Activated CD4-positive, alpha-beta memory T cell treated with anti-CD3 and anti-CD28 coated beads for 36 hours (primary cell): ENCODE measurements at regions of chr2 and their contacts with region 1.

Region 1: GRCh38 chr2:161077367-161078210 is 82.6 kb upstream of the TANK start:
- DNase-seq: peak; percentile 84
- H3K4me3 Mint-ChIP-seq: peak overlapping the region; percentile 6
- H3K27ac Mint-ChIP-seq: peak overlapping the region; percentile 85
- H3K4me1 Mint-ChIP-seq: peaks cover 42% of the 10 kb centered on the region
- H3K27me3 Mint-ChIP-seq: no peaks in the 10 kb centered on the region

Region 2: DNA sequence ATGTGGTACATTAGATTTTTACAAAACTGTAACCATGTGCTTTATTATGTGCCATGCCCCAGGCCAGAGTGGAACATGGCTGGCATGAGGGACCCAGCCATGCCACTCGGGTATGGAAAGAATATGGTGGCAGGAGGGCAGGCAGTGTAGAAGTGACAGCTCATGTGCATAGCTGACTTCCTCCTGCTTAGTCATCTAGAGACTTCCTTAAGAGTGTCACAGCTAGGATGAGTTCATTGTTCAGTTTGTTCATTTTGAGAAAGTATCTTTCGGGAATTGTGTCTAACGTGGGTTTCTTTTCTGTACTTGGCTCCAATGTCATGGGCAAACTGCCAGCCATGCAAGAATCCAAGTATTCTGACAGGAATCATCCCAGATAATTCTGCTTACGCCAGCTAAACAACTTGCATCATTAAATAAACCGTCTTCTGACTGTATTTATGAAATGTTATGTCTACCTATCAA is 783.2 kb before region 1 on chr2:
- CTCF ChIA-PET with region 1: no interaction called
- POLR2A ChIA-PET with region 1: no interaction called
- intact Hi-C with region 1: loop called (anchors 1 kb)
- DNase-seq: peak; percentile 68
- H3K4me3 Mint-ChIP-seq: no peak overlapping the region
- H3K27ac Mint-ChIP-seq: peak overlapping the region; percentile 18
- H3K4me1 Mint-ChIP-seq: peaks cover 76% of the 10 kb centered on the region
- H3K27me3 Mint-ChIP-seq: no peaks in the 10 kb centered on the region

Region 3: DNA sequence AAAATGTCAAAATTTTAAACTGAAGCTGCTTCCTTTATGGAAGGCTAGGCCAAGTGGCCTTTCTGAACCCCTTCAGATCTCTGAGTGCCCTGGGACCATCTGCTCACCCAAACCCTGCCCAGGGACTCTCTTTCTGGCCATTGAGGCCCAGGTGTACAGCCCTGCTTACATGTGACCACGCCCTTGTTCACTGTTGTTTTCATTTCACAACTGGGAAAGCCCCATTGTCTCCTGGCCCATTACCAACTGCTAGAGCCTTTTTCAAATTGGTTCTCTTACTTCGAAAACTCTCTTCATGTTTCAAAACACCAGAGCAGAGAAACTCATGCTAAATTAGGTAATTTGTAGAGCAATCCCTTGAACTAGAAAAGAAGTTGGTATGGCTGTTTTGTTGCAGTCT is 136.9 kb before region 1 on chr2:
- CTCF ChIA-PET with region 1: no interaction called
- POLR2A ChIA-PET with region 1: no interaction called
- intact Hi-C with region 1: no loop called
- DNase-seq: peak; percentile 26
- H3K4me3 Mint-ChIP-seq: no peak overlapping the region
- H3K27ac Mint-ChIP-seq: peak overlapping the region; percentile 7
- H3K4me1 Mint-ChIP-seq: peaks cover 25% of the 10 kb centered on the region
- H3K27me3 Mint-ChIP-seq: no peaks in the 10 kb centered on the region

Region 4: DNA sequence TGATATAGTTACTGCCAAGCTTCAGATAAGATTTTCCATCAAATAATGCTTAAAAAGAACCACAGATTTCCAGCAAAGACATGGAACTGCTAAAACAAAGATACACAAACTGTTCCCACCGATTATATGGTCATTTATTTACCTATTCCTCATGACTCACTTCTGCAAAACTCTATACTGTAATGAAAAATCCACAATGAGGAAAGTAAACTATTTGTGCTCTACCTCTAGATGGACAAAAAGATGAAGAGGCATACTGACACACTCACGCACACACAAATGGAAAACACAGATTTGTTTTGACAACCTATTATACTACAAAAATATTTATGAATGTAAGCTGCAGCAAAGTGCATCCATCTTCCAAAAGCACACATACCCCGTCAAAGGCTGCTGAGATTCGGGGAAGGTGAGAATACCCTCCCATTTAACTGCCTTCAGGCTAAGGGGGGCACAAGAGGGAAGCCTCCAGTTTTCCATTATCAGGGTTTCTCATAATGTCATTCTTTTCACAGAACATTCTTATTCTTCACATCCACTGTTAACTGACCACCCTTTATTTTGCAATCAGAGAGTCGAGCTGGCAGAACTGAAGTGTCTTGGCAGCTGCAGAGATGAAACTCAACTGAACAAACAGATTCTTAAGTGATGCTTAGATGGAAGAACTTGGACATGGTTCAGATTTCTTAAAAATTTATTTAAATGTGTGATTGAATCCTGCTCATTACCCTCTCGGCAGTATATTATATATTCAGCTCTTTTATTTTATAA is 33.3 kb before region 1 on chr2:
- CTCF ChIA-PET with region 1: no interaction called
- POLR2A ChIA-PET with region 1: no interaction called
- intact Hi-C with region 1: no loop called
- DNase-seq: no peak
- H3K4me3 Mint-ChIP-seq: no peak overlapping the region
- H3K27ac Mint-ChIP-seq: no peak overlapping the region
- H3K4me1 Mint-ChIP-seq: no peaks in the 10 kb centered on the region
- H3K27me3 Mint-ChIP-seq: peaks cover 14% of the 10 kb centered on the region

Region 5: DNA sequence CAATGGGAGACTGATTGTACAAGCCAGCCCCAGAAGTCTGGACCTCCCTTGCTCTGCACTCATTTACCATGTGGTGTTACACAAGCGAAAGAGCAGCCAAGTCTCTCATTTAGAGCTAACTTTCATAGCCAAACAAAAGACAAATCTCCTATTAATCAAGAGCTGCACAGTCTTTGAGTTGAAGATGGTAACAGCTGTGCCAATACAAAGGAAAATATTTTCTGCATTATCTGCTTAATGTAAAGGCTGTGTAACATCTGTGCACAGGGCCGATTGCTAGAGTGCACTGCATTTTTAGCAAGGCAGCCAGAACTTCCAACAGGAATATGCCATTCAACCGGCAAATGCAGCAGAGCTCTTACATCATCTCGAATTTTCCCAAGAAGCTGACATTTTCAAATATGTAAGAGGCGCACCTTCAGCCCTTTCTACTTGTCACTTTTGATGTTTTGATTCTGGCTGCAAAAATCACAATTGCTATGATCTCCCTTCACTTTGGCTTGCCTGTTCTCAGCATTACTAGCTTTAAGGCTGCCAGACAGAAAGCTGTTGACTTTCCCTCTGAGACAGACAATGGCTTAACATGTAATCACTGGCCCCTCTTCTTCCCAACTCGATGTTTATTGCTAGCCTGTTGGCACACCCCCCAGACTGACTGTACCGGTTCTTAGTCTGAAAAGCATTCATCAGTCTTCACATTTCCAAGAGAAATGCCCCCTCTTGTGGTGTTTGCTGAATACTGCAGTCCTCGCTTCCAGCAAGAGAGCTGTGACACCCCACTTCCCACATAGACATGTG is 14.2 kb before region 1 on chr2:
- CTCF ChIA-PET with region 1: interaction called, 48 read pairs
- POLR2A ChIA-PET with region 1: no interaction called
- intact Hi-C with region 1: no loop called
- DNase-seq: peak; percentile 74
- H3K4me3 Mint-ChIP-seq: no peak overlapping the region
- H3K27ac Mint-ChIP-seq: no peak overlapping the region
- H3K4me1 Mint-ChIP-seq: peaks cover 10% of the 10 kb centered on the region
- H3K27me3 Mint-ChIP-seq: no peaks in the 10 kb centered on the region

Region 6: DNA sequence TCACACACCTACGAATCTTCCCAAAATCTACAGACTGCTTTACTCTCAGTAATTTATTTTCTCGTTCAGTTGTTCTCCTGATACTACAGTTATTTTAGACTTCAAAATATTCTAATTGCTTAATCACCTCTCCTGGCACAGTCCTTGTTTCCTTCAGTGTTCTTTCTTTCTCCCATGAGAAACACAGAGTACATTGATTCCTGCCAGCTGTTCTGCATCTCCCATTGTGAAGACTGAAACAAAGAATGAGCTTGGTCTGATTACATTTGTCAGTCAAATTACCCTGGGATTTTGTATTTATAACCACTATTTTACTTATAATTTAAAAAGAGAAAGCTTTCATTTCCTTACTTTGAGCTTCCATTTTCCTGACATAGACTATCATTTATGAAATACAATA is 18.7 kb after region 1 on chr2:
- CTCF ChIA-PET with region 1: no interaction called
- POLR2A ChIA-PET with region 1: no interaction called
- intact Hi-C with region 1: no loop called
- DNase-seq: no peak
- H3K4me3 Mint-ChIP-seq: no peak overlapping the region
- H3K27ac Mint-ChIP-seq: no peak overlapping the region
- H3K4me1 Mint-ChIP-seq: peaks cover 3% of the 10 kb centered on the region
- H3K27me3 Mint-ChIP-seq: no peaks in the 10 kb centered on the region

Region 7: GRCh38 chr2:161136696-161137324 is 59.2 kb after region 1 on chr2:
- CTCF ChIA-PET with region 1: interaction called, 7 read pairs
- POLR2A ChIA-PET with region 1: interaction called, 6 read pairs
- intact Hi-C with region 1: loop called (anchors 1 kb)
- DNase-seq: peak; percentile 35
- H3K4me3 Mint-ChIP-seq: peak overlapping the region; percentile 96
- H3K27ac Mint-ChIP-seq: peak overlapping the region; percentile 100
- H3K4me1 Mint-ChIP-seq: peaks cover 45% of the 10 kb centered on the region
- H3K27me3 Mint-ChIP-seq: no peaks in the 10 kb centered on the region

Region 8: DNA sequence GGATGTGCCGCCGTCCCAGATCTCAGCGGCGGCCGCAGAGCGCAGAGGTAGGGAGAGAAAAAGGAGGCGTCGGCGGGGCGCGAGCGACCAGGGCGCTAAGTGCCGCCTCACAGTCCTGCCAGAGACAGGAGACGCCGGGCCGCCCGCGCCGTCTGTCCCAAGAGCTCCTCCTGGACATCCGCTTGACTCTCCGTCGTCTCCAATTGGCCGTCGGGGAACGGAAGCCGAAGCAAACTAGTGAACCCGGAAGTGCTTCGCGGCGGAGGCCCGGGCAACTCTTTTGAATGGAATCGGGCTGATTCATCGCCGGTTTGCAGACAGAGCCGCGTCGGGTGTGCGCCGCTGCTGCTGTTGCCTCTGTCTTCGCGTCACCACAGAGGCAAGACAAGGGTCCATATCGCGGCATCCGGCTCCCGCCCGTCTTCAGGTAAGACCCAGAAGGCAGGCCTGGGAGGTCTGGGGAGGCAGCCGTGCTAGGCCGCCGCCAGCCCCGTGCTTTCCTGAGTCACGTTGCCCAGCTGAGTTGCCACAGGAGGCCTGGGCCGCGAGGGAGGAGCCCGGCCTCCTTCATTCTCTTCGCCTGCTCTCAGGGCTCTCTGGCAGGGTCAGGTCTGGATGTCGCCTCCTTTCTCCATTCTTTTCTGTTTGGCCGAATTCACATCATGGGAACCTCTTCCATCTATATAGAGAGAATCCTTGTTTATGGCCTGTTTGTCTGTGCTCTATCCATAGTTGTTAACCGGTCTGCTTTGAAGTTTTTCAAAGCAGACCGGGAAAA is 230.8 kb after region 1 on chr2 and contains the start of gene PSMD14:
- CTCF ChIA-PET with region 1: no interaction called
- POLR2A ChIA-PET with region 1: no interaction called
- intact Hi-C with region 1: loop called (anchors 1 kb)
- DNase-seq: peak; percentile 96
- H3K4me3 Mint-ChIP-seq: peak within 1 kb of the TSS; percentile 91
- H3K27ac Mint-ChIP-seq: peak within 1 kb of the TSS; percentile 92
- H3K4me1 Mint-ChIP-seq: peaks cover 37% of the 10 kb centered on the region
- H3K27me3 Mint-ChIP-seq: no peaks in the 10 kb centered on the region
- total RNA-seq, gene PSMD14: 84.2 to 89.8 TPM

Region 9: DNA sequence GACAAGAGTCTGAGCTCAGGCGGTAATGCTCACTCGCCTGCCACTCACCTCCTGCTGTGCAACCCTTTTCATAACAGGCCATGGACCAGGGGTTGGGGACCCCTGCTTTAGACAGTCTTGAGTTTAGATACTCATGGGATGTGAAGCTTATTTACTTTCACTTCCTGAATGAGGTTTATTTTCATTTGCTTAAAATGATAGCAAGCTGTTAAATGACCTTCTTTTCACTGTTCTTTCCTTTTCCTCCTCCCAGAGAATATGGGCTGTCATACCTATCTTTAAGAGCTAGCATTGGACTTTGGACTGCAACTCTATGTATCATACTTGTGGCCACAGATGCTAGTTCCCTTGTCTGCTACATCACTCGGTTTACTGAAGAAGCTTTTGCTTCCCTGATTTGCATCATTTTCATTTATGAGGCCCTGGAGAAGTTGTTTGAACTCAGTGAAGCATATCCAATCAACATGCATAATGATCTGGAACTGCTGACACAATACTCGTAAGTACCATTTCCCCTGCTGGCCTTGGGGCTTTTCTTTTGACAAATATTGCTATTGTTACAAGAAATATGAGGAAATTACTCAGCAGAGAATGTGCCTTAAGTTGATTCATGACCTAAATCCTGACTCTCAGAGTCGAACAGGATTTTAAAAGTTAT is 827.9 kb after region 1 on chr2:
- CTCF ChIA-PET with region 1: no interaction called
- POLR2A ChIA-PET with region 1: no interaction called
- intact Hi-C with region 1: no loop called
- DNase-seq: peak; percentile 43
- H3K4me3 Mint-ChIP-seq: no peak overlapping the region
- H3K27ac Mint-ChIP-seq: peak overlapping the region; percentile 66
- H3K4me1 Mint-ChIP-seq: peaks cover 10% of the 10 kb centered on the region
- H3K27me3 Mint-ChIP-seq: no peaks in the 10 kb centered on the region